ENCODE measurements at regions of chr6 and their contacts with region 1.

Region 1: GRCh38 chr6:125818225-125818657 is 27.5 kb downstream of the NCOA7 start:
- DNase-seq: no peak
- ATAC-seq: no peak
- H3K4me3 ChIP-seq: no peak overlapping the region
- H3K27ac ChIP-seq: no peak overlapping the region
- H3K4me1 ChIP-seq: no peaks in the 10 kb centered on the region
- H3K27me3 ChIP-seq: no peaks in the 10 kb centered on the region
- CTCF ChIP-seq: no peak

Region 2: GRCh38 chr6:125453516-125453915 is 364.7 kb before region 1 on chr6:
- intact Hi-C with region 1: no loop called
- DNase-seq: no peak
- ATAC-seq: no peak
- H3K4me3 ChIP-seq: no peak overlapping the region
- H3K27ac ChIP-seq: no peak overlapping the region
- H3K4me1 ChIP-seq: no peaks in the 10 kb centered on the region
- H3K27me3 ChIP-seq: no peaks in the 10 kb centered on the region
- CTCF ChIP-seq: no peak

Region 3: GRCh38 chr6:125884634-125885371 is 66.6 kb after region 1 on chr6:
- intact Hi-C with region 1: loop called in 1 of 2 experiments (anchors 5 kb)
- DNase-seq: no peak
- ATAC-seq: no peak
- H3K4me3 ChIP-seq: no peak overlapping the region
- H3K27ac ChIP-seq: no peak overlapping the region
- H3K4me1 ChIP-seq: no peaks in the 10 kb centered on the region
- H3K27me3 ChIP-seq: no peaks in the 10 kb centered on the region
- CTCF ChIP-seq: no peak